CD8-positive, alpha-beta T cell (primary cell): ENCODE measurements at regions of chr7 and their contacts with region 1.

Region 1: GRCh38 chr7:26151953-26152781 is at the start of gene NFE2L3:
- DNase-seq: peak; percentile 64 to 90 (median 77)
- ATAC-seq: peak; percentile 81
- H3K4me3 ChIP-seq: peak within 1 kb of the TSS; percentile 70 to 91
- H3K4me3 Mint-ChIP-seq: peak within 1 kb of the TSS; percentile 87
- H3K27ac ChIP-seq: peak within 1 kb of the TSS in 1 of 2 experiments; percentile 75
- H3K27ac Mint-ChIP-seq: peak within 1 kb of the TSS; percentile 73
- H3K4me1 ChIP-seq: peaks cover 39% of the 10 kb centered on the region
- H3K4me1 Mint-ChIP-seq: peaks cover 50% of the 10 kb centered on the region
- H3K27me3 ChIP-seq: no peaks in the 10 kb centered on the region
- H3K27me3 Mint-ChIP-seq: no peaks in the 10 kb centered on the region
- CTCF ChIP-seq: no peak
- total RNA-seq, gene NFE2L3: 0.43 to 0.50 TPM

Region 2: GRCh38 chr7:25951031-25951948 is 200.9 kb before region 1 on chr7:
- CTCF ChIA-PET with region 1: no interaction called
- POLR2A ChIA-PET with region 1: no interaction called
- intact Hi-C with region 1: loop called in 1 of 2 experiments (anchors 5 kb)
- DNase-seq: peak; percentile 70 to 93 (median 87)
- ATAC-seq: peak; percentile 97
- H3K4me3 ChIP-seq: peak overlapping the region; percentile 54 to 65
- H3K4me3 Mint-ChIP-seq: peak overlapping the region; percentile 90
- H3K27ac ChIP-seq: peak overlapping the region in 1 of 2 experiments; percentile 27
- H3K27ac Mint-ChIP-seq: peak overlapping the region; percentile 76
- H3K4me1 ChIP-seq: peaks cover 18% of the 10 kb centered on the region
- H3K4me1 Mint-ChIP-seq: peaks cover 22% of the 10 kb centered on the region
- H3K27me3 ChIP-seq: no peaks in the 10 kb centered on the region
- H3K27me3 Mint-ChIP-seq: peaks cover 2% of the 10 kb centered on the region
- CTCF ChIP-seq: no peak

Region 3: DNA sequence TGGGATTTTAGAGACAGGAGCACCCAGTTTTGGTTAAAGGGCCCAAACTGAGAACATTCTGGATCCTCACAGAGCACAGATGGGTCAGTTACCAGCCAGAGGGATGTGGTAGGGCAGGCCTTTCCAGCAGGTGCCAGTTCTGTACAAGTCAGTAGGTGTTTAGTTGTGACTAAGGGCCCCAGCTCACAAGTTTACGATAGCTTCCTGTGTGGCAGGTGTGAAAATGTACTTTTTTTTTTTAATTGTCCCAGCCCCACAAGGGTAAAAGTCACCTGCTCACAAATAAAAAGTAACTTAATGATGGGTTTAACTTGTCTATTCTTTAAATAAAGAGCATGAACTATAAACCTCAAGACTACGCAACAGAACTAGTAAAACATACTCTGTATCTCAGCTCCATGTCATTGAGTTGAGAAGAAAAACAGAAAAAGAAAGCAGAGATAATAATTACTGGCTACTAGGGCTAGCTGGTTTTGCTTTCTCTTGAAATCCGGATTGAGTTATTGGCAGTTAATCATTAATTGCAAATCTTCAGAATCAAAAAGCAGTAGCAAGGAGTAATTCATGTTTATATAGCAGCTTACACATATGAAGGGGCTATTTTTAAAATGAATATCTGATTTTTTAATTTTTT is 15.3 kb after region 1 on chr7:
- CTCF ChIA-PET with region 1: no interaction called
- POLR2A ChIA-PET with region 1: interaction called, 5 read pairs
- intact Hi-C with region 1: loop called in 1 of 2 experiments (anchors 1 kb)
- DNase-seq: peak in 3 of 9 experiments; percentile 54 to 84 (median 74)
- ATAC-seq: peak; percentile 88
- H3K4me3 ChIP-seq: no peak overlapping the region
- H3K4me3 Mint-ChIP-seq: no peak overlapping the region
- H3K27ac ChIP-seq: peak overlapping the region in 1 of 2 experiments; percentile 84
- H3K27ac Mint-ChIP-seq: peak overlapping the region; percentile 87
- H3K4me1 ChIP-seq: peaks cover 14% of the 10 kb centered on the region
- H3K4me1 Mint-ChIP-seq: peaks cover 16% of the 10 kb centered on the region
- H3K27me3 ChIP-seq: no peaks in the 10 kb centered on the region
- H3K27me3 Mint-ChIP-seq: no peaks in the 10 kb centered on the region
- CTCF ChIP-seq: no peak

Region 4: DNA sequence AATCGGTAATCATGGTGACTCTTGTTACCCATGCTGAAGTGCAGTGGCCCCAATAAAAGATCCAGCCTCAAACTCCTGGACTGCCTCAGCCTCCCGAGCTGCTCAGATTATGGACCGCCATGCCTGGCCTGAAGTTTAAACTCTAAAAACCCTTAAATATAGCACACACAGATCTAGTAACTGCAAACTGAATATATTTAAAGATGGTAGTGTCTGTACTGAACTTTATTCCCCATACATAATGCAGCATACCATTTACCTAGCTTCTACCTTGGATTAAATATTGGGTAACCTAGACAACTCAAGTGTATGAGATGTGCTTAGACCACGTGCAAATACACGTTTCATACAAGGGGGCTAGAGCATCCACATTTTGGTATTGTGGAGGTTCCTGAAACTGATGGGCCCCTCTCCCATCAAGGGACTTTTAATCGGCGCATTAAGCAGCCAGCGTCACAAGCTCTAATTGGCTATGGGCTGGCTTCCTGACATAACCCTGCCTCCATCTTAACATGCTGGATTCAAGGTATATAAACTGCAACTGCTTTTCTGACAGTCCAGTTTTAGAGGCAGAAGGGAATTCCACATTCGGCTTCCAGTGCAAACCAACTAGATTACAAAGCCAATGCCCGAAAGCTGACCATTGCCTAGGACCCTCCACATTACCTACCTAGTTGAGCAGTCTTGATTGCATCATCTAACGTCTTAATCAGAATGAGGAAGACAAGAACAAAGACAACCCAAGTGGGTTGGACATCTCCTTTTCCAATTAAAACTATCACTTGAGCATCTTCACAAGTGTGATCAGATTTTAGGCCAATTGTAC is 35.4 kb after region 1 on chr7:
- CTCF ChIA-PET with region 1: interaction called, 4 read pairs
- POLR2A ChIA-PET with region 1: interaction called, 15 read pairs
- intact Hi-C with region 1: loop called (anchors 2 kb)
- DNase-seq: peak in 1 of 9 experiments; percentile 38
- ATAC-seq: peak; percentile 9
- H3K4me3 ChIP-seq: no peak overlapping the region
- H3K4me3 Mint-ChIP-seq: no peak overlapping the region
- H3K27ac ChIP-seq: peak overlapping the region in 1 of 2 experiments; percentile 14
- H3K27ac Mint-ChIP-seq: peak overlapping the region; percentile 76
- H3K4me1 ChIP-seq: peaks cover 43% of the 10 kb centered on the region
- H3K4me1 Mint-ChIP-seq: peaks cover 79% of the 10 kb centered on the region
- H3K27me3 ChIP-seq: no peaks in the 10 kb centered on the region
- H3K27me3 Mint-ChIP-seq: no peaks in the 10 kb centered on the region
- CTCF ChIP-seq: no peak

Region 5: GRCh38 chr7:26193432-26194207 is 41.5 kb after region 1 on chr7:
- CTCF ChIA-PET with region 1: interaction called, 28 read pairs
- POLR2A ChIA-PET with region 1: interaction called, 94 read pairs
- intact Hi-C with region 1: loop called (anchors 2 kb)
- DNase-seq: peak in 1 of 9 experiments; percentile 42
- ATAC-seq: peak; percentile 15
- H3K4me3 ChIP-seq: no peak overlapping the region
- H3K4me3 Mint-ChIP-seq: peak overlapping the region; percentile 73
- H3K27ac ChIP-seq: peak overlapping the region in 1 of 2 experiments; percentile 55
- H3K27ac Mint-ChIP-seq: peak overlapping the region; percentile 90
- H3K4me1 ChIP-seq: peaks cover 82% of the 10 kb centered on the region
- H3K4me1 Mint-ChIP-seq: peaks cover 85% of the 10 kb centered on the region
- H3K27me3 ChIP-seq: no peaks in the 10 kb centered on the region
- H3K27me3 Mint-ChIP-seq: no peaks in the 10 kb centered on the region
- CTCF ChIP-seq: no peak

Region 6: GRCh38 chr7:26291699-26292538 is 139.8 kb after region 1 on chr7 and contains the start of gene SNX10:
- CTCF ChIA-PET with region 1: no interaction called
- POLR2A ChIA-PET with region 1: interaction called, 4 read pairs
- intact Hi-C with region 1: loop called (anchors 2 to 5 kb)
- DNase-seq: peak; percentile 45 to 91 (median 72)
- ATAC-seq: peak; percentile 79
- H3K4me3 ChIP-seq: peak within 1 kb of the TSS; percentile 70 to 94
- H3K4me3 Mint-ChIP-seq: peak within 1 kb of the TSS; percentile 91
- H3K27ac ChIP-seq: peak within 1 kb of the TSS; percentile 43 to 78
- H3K27ac Mint-ChIP-seq: peak within 1 kb of the TSS; percentile 85
- H3K4me1 ChIP-seq: peaks cover 32% of the 10 kb centered on the region
- H3K4me1 Mint-ChIP-seq: peaks cover 38% of the 10 kb centered on the region
- H3K27me3 ChIP-seq: no peaks in the 10 kb centered on the region
- H3K27me3 Mint-ChIP-seq: no peaks in the 10 kb centered on the region
- CTCF ChIP-seq: no peak
- total RNA-seq, gene SNX10: 3.9 to 7.0 TPM

Region 7: GRCh38 chr7:26372704-26373103 is 220.5 kb after region 1 on chr7:
- CTCF ChIA-PET with region 1: no interaction called
- POLR2A ChIA-PET with region 1: no interaction called
- intact Hi-C with region 1: no loop called
- DNase-seq: no peak
- ATAC-seq: no peak
- H3K4me3 ChIP-seq: no peak overlapping the region
- H3K4me3 Mint-ChIP-seq: no peak overlapping the region
- H3K27ac ChIP-seq: no peak overlapping the region
- H3K27ac Mint-ChIP-seq: no peak overlapping the region
- H3K4me1 ChIP-seq: peaks cover 17% of the 10 kb centered on the region
- H3K4me1 Mint-ChIP-seq: peaks cover 13% of the 10 kb centered on the region
- H3K27me3 ChIP-seq: peaks cover 7 to 11% of the 10 kb centered on the region in 2 experiments
- H3K27me3 Mint-ChIP-seq: peaks cover 16% of the 10 kb centered on the region
- CTCF ChIP-seq: no peak